Heart right ventricle (tissue), 16 donors: ENCODE measurements at regions of chr3 and their contacts with region 1.

Region 1: GRCh38 chr3:143972505-143973255 is 1.1 kb downstream of the DIPK2A start:
- DNase-seq: peak; percentile 69 to 75
- ATAC-seq: peak; percentile 20 to 67 (median 31)
- H3K4me3 ChIP-seq: peak overlapping the region; percentile 71 to 98 (median 86)
- H3K27ac ChIP-seq: peak overlapping the region; percentile 85 to 97 (median 96)
- H3K4me1 ChIP-seq: peaks cover 0 to 47% (median 25%) of the 10 kb centered on the region in 9 donors
- H3K27me3 ChIP-seq: no peaks in the 10 kb centered on the region
- CTCF ChIP-seq: peak in 8 of 9 donors; percentile 28 to 62 (median 54)

Region 2: DNA sequence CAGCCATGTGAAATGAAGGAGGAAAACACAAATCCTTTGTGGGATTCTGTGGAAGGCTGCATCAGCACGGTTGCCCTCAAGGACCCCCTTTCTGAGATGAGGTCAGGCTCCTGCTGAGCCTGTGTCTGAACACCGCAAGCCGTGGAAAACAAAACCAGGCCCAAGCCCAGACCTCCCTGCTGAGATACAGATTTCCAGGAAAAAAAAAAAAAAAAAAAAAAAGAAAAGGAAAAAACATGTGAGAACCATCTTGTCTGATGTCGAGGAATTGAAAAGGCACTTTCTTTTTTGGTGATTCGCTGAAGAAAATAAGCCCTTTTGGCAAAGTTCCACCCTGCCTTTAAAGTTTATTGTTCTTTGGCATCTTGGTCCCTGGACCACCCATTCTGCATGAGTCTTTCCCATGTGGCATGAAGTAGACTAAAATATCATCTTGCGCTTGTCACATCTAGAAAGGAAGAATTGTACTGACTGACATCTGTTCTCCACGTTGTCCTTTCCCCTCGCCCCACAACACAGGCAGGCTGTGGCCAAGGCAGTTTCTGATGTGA is 735.5 kb before region 1 on chr3:
- intact Hi-C with region 1: no loop called
- DNase-seq: no peak
- ATAC-seq: no peak
- H3K4me3 ChIP-seq: no peak overlapping the region
- H3K27ac ChIP-seq: no peak overlapping the region
- H3K4me1 ChIP-seq: no peaks in the 10 kb centered on the region
- H3K27me3 ChIP-seq: no peaks in the 10 kb centered on the region
- CTCF ChIP-seq: no peak

Region 3: DNA sequence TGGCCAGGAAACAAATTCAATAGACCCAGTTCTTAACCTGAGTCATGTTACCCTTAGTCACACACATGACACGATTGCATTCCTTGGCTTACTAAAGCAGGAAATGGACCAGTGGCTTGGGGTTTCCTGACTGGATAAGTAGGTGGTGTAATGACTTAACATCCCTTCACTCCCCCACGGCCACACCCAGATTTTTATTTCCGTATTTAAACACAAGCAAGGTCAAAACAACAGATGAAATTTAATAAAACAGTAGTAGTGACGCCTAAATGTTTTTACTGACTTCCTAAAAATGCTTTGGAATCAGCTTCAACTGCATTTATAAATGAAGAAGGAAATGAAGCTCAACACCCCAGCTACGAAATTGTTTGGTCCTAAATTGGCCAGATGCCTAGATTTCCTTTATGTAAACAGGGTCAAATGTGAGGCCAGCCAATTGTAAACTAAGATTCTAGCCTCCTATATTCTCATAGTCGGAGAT is 528.8 kb before region 1 on chr3:
- intact Hi-C with region 1: no loop called
- DNase-seq: peak in 1 of 2 donors; percentile 85
- ATAC-seq: peak; percentile 82 to 98 (median 96)
- H3K4me3 ChIP-seq: no peak overlapping the region
- H3K27ac ChIP-seq: peak overlapping the region in 9 of 10 donors; percentile 50 to 80 (median 74)
- H3K4me1 ChIP-seq: peaks cover 6 to 27% (median 16%) of the 10 kb centered on the region in 9 donors
- H3K27me3 ChIP-seq: no peaks in the 10 kb centered on the region
- CTCF ChIP-seq: no peak

Region 4: DNA sequence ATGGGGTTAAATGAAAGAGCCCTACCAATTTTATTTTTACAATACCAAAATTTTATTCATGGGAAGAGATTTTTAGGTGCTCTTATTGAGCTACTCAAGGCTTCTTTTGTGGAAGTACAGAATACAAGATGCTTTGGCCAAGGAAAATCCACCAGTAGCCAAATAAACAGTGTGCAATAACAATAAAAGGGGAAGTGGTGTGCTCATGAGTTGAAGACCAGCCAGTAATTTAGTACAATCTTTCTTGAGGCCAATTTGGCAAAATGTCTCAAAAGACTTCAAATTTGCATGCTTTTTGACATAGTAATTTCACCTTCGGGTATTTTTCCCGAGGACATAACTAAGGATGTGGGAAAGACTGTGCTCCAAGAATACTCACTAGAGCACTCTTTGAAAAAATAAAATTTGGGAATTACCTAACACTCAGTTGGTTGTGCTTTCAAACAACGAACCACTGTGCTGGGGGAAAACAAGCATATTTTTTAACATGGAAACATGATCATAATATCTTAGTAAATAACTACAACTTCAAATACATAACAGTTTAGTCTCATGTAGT is 292.9 kb after region 1 on chr3:
- intact Hi-C with region 1: loop called in 1 of 10 experiments (anchors 5 kb)
- DNase-seq: peak in 1 of 2 donors; percentile 23
- ATAC-seq: peak in 7 of 8 donors; percentile 56 to 94 (median 85)
- H3K4me3 ChIP-seq: peak overlapping the region in 1 of 10 donors; percentile 4
- H3K27ac ChIP-seq: peak overlapping the region in 6 of 10 donors; percentile 8 to 47 (median 32)
- H3K4me1 ChIP-seq: peaks cover 0 to 19% (median 4%) of the 10 kb centered on the region in 9 donors
- H3K27me3 ChIP-seq: no peaks in the 10 kb centered on the region
- CTCF ChIP-seq: no peak

Region 5: GRCh38 chr3:144569651-144570050 is 597.0 kb after region 1 on chr3:
- intact Hi-C with region 1: no loop called
- DNase-seq: no peak
- ATAC-seq: no peak
- H3K4me3 ChIP-seq: no peak overlapping the region
- H3K27ac ChIP-seq: no peak overlapping the region
- H3K4me1 ChIP-seq: no peaks in the 10 kb centered on the region
- H3K27me3 ChIP-seq: no peaks in the 10 kb centered on the region
- CTCF ChIP-seq: no peak

Region 6: GRCh38 chr3:144770915-144771351 is 798.3 kb after region 1 on chr3:
- intact Hi-C with region 1: loop called in 1 of 10 experiments (anchors 10 kb)
- DNase-seq: no peak
- ATAC-seq: peak in 4 of 8 donors; percentile 49 to 77 (median 64)
- H3K4me3 ChIP-seq: no peak overlapping the region
- H3K27ac ChIP-seq: peak overlapping the region in 1 of 10 donors; percentile 36
- H3K4me1 ChIP-seq: no peaks in the 10 kb centered on the region
- H3K27me3 ChIP-seq: no peaks in the 10 kb centered on the region
- CTCF ChIP-seq: peak in 6 of 9 donors; percentile 26 to 55 (median 38)